B cell (primary cell): ENCODE measurements at regions of chr10 and their contacts with region 1.

Region 1: GRCh38 chr10:57338823-57339558 is 928.7 kb downstream of the IPMK start:
- DNase-seq: peak; percentile 16
- ATAC-seq: no peak
- H3K4me3 ChIP-seq: no peak overlapping the region
- H3K4me3 Mint-ChIP-seq: no peak overlapping the region
- H3K27ac ChIP-seq: no peak overlapping the region
- H3K27ac Mint-ChIP-seq: no peak overlapping the region
- H3K4me1 ChIP-seq: no peaks in the 10 kb centered on the region
- H3K4me1 Mint-ChIP-seq: no peaks in the 10 kb centered on the region
- H3K27me3 ChIP-seq: no peaks in the 10 kb centered on the region
- H3K27me3 Mint-ChIP-seq: no peaks in the 10 kb centered on the region
- CTCF ChIP-seq: peak; percentile 70

Region 2: DNA sequence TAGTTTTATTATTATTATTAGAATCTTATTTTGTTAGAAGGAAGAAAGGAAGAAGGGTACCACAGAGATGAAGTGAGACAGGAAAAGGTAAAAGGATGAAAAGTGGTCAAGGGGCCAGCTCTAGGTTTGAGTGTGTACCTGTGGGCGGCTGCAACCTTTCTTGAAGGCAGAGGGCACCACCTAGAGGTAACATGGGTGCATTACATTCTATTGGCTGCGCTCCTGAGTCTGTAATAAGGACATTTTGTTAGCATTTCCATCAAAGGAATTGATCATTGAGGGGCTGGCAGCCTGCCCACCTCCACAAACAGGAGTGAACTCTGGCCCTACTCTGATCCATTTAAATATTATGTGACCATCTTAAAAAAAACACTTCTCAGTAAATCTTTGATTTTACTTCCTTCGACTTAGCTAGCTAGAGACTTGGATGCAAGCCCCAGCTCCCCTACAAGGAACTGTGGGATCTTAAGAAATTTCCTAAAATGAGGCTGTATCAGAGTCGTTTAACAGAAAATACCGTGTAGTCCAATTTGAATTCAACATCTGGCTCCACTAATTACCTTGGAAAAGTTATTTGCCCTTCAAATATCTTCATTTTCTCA is 318.3 kb after region 1 on chr10:
- CTCF ChIA-PET with region 1: no interaction called
- POLR2A ChIA-PET with region 1: no interaction called
- intact Hi-C with region 1: loop called (anchors 2 kb)
- DNase-seq: peak; percentile 38
- ATAC-seq: peak; percentile 62
- H3K4me3 ChIP-seq: no peak overlapping the region
- H3K4me3 Mint-ChIP-seq: no peak overlapping the region
- H3K27ac ChIP-seq: no peak overlapping the region
- H3K27ac Mint-ChIP-seq: no peak overlapping the region
- H3K4me1 ChIP-seq: no peaks in the 10 kb centered on the region
- H3K4me1 Mint-ChIP-seq: no peaks in the 10 kb centered on the region
- H3K27me3 ChIP-seq: no peaks in the 10 kb centered on the region
- H3K27me3 Mint-ChIP-seq: no peaks in the 10 kb centered on the region
- CTCF ChIP-seq: peak; percentile 67